Left cardiac atrium (tissue), 4 donors: ENCODE measurements at regions of chr18 and their contacts with region 1.

Region 1: GRCh38 chr18:53603276-53603675 is 621.2 kb downstream of the MBD2 start:
- DNase-seq: no peak
- ATAC-seq: no peak

Region 2: DNA sequence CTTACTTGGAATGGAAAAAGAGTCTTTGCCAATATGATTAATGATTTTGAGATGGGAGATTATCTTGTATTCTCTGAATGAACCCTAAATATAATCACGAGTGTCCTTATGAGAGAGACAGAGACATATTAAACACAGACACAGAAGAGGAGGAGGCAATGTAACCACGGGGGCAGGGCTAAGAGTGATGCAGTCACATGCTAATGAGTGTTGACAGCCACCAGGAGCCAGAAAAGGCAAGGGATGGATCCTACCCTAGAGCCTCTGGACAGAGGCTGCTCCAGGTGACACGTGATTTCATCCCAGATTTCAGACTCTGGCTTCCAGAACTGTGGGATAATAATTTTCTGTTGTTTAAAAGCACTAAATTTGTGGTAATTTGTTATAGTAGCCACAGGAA is 58.4 kb before region 1 on chr18:
- intact Hi-C with region 1: loop called in 1 of 2 experiments (anchors 10 kb)
- DNase-seq: no peak
- ATAC-seq: no peak

Region 3: DNA sequence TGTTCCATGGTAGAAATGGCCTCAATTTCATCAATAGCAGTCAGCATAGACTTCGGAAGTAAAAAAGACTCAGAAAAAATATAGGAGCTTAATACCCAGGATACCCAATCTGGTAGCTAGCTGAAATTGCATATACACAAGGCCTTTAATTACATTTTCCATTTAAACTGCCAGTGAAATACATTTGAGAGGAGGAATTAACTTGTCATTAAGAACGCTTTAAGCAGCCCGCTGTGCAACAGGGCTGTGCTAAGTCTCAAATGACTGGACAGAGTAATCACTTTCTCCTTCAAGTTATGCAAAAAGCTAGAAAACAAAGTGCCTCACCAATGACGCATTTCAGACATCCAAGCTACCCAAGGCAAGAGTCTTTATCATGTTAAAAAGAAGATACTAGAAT is 62.4 kb after region 1 on chr18:
- intact Hi-C with region 1: loop called in 1 of 2 experiments (anchors 10 kb)
- DNase-seq: no peak
- ATAC-seq: no peak